GM10248 (cell line): ENCODE measurements at regions of chr11 and their contacts with region 1.

Region 1: GRCh38 chr11:72024069-72024754 is 25.5 kb downstream of the IL18BP start:
- DNase-seq: no peak
- CTCF ChIP-seq: no peak

Region 2: DNA sequence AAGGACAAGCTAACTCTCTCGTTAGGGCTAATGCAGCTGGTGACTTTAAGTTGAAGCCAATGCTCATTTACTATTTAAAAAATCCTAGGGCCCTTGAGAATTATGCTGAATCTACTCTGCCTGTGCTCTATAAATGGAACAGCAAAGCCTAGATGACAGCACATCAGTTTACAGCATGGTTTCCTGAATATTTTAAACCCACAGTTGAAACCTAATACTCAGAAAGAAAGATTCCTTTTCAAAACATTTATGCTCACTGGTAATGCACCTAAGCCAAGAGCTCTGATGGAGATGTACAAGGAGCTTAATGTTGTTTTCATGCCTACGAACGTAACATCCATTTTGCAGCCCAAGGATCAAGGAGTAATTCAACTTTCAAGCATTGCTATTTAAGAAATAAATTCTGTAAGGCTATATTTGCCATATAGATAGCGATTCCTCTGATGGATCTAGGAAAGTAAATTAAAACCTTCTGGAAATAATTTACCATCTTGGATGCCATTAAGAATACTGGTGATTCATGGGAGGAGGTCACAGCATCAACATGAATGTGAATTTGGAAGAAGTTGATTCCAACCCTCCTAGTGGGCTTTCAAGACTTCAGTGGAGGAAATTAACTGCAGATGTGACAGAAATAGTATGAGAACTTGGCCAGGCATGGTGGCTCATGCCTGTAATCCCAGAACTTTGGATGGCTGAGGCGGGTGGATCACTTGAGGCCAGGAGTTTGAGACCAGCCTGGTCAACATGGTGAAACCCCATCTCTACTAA is 110.3 kb before region 1 on chr11:
- CTCF ChIA-PET with region 1: no interaction called
- POLR2A ChIA-PET with region 1: no interaction called
- DNase-seq: no peak
- CTCF ChIP-seq: no peak

Region 3: DNA sequence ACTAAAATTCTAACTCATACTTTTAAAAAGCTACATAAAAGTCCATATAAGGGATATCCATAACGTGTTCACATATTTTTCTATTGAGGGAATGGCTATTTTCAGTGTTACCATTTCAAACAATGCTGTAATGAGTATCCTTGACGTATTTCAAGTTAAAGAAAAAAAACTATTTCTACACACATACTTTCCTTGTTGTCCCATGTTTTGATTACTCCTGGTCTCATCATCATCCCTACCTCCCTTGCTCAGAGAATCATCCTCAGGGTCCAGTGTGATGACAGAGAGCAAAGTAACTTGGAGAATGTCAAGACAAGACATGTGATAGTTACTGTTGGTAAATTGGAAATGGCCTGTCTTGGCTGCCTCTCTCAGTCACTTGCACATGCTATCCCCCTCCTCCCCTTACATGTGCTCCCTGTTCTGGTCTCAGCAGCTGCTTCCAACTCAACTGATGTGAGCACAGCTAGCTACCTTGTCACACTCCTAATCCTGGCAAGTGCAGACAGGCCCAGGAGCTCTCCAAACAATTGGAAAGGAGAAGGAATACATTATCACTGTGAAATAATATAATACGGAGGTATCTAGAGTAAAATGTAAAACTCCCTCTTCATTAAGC is 34.3 kb after region 1 on chr11:
- CTCF ChIA-PET with region 1: interaction called, 45 read pairs
- POLR2A ChIA-PET with region 1: no interaction called
- DNase-seq: no peak
- CTCF ChIP-seq: no peak

Region 4: DNA sequence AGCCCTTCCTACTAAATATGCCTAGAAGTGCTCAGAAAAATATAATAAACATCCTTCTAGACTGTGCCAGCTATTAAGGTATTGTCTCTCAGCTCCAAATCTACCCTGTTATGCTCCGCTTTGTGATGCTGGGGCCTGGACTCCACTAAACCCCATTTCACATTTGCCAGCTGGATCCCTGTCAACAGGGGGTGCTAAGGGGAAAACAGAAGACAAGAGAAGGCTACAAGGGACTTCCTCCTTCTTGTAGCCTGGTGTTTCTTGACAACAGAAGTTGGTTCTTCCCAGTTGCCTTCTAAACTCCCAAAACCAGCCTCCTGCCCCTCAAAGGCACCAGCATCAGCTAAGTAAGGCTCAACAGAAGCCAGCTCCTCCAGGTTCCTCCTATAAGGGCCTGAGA is 50.9 kb after region 1 on chr11:
- CTCF ChIA-PET with region 1: interaction called, 15 read pairs
- POLR2A ChIA-PET with region 1: no interaction called
- DNase-seq: no peak
- CTCF ChIP-seq: peak; percentile 52

Region 5: DNA sequence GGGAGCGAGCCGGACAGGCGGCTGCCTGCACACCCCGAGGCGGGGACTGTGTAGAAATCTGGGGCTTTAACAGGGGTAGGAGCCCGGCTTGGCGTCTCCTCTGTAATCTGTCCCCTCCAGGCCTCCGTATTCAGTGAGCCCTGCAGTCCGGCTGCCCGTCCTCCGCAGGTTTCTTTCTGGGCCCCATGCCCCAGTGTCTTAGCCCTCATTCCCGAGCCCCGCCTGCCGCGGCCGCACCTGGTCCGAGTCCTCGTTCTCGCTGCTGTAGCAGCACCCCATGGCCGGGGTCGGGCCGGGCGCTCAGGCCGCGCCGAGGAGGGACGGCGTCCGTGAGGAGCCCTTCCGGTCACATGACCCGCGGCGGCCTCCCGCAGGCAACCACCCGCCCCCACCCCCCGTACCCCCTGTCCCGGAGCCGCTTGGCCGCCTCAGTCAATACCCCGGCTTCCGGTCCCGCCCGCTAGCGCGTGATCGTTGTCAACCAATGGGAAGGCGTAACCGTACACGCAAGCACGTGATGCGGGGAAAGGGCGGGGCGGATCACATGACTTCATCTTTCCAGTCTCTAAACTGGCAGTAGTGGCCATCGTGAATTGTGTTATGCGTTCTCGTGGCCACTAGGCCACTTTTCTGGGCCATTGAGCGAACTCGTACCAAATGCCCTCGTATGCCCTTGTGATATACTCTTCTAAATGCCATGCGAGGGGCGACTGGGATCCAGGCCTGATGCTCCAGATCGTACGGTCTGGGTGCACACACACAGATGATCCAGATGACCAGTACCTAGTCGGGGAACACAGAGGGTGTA is 78.9 kb after region 1 on chr11 and contains the start of gene LAMTOR1:
- CTCF ChIA-PET with region 1: interaction called, 208 read pairs
- POLR2A ChIA-PET with region 1: no interaction called
- DNase-seq: peak; percentile 97
- CTCF ChIP-seq: no peak

Region 6: DNA sequence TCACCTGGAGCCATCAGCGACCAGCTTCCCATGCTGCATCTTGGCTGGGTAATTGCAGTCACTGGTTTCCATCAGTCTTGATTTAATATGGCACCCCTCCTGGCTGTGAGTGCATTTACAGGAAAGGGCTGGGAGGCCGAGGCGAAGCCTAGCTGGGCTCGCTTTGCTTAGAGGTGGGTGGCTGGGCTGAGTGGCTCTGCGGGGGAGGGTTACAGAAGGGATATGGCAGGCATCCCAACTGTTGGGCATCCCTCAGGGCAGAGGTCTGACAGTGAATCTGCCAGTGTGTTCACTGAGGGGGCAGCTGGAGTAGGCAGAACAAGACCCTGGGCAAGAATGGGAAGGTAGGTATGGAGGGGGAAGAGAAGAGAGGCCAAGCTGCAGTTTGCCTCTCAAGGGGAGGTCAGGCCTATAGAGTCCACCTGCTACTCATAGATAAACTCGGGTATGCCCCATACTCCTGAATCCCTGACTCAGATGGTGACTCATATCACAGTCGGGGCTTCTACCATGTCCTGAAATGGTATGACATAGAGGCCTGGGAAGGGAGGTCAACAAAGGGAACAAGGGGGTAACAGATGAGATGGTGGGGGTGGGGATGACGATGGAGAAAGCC is 297.3 kb after region 1 on chr11:
- CTCF ChIA-PET with region 1: no interaction called
- POLR2A ChIA-PET with region 1: no interaction called
- DNase-seq: no peak
- CTCF ChIP-seq: no peak